Sciatic nerve (tissue), 2 donors: ENCODE measurements at regions of chr9 and their contacts with region 1.

Region 1: DNA sequence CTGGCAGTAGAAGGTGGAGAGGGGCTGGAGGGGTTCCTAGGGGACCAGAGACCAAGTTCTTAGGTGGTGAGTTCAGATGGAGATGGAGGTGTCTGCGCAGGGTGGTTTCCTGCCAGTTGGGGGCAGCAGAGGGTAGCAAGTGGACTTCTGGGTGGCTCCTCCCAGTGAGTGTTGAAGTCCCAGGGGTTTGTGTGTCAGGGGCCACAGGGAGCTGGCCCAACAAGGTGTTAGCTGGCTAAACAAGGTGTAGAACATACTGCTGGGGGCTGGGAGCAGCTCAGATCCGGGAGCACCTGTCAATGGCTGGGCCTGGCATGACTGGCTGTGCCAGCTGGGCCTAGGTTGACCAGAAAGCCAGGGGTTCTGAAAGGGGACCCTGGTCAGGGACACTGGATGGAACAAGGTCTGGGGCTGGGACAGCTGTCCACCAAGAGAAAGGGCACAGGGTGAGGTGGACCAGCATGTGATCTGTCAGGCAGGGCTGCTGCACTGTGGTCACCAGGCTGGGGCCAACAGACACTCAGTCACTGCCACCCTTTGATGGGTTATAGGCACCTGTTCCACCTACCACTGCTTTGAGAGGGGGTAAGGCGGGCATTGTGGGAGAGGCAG is 35.6 kb downstream of the DAB2IP start:
- DNase-seq: peak; percentile 88
- ATAC-seq: peak; percentile 85

Region 2: GRCh38 chr9:121545875-121546423 is 141.1 kb before region 1 on chr9:
- intact Hi-C with region 1: loop called (anchors 5 kb)
- DNase-seq: peak; percentile 96
- ATAC-seq: peak; percentile 96

Region 3: DNA sequence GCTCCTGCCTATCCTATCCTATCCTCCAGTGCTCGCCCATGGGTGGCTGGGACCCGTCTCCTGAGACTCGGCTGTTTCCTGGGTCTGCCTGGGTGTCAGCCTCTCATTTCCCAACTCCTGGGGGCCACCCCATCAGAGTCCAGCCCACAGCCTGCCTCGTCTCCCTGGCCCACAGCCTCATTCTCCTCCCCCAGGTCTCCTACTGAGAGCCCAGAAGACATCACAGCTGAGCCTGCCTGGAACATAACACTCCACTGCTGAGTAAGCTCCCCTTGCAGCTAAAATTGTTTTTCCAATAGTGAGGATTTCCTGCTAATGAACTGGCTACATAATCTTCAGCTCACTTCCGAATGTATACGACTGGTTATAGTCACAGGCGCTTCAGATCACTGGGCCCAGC is 310.8 kb after region 1 on chr9:
- intact Hi-C with region 1: loop called (anchors 5 kb)
- DNase-seq: no peak
- ATAC-seq: no peak